ENCODE measurements at regions of chr15 and their contacts with region 1.

Region 1: DNA sequence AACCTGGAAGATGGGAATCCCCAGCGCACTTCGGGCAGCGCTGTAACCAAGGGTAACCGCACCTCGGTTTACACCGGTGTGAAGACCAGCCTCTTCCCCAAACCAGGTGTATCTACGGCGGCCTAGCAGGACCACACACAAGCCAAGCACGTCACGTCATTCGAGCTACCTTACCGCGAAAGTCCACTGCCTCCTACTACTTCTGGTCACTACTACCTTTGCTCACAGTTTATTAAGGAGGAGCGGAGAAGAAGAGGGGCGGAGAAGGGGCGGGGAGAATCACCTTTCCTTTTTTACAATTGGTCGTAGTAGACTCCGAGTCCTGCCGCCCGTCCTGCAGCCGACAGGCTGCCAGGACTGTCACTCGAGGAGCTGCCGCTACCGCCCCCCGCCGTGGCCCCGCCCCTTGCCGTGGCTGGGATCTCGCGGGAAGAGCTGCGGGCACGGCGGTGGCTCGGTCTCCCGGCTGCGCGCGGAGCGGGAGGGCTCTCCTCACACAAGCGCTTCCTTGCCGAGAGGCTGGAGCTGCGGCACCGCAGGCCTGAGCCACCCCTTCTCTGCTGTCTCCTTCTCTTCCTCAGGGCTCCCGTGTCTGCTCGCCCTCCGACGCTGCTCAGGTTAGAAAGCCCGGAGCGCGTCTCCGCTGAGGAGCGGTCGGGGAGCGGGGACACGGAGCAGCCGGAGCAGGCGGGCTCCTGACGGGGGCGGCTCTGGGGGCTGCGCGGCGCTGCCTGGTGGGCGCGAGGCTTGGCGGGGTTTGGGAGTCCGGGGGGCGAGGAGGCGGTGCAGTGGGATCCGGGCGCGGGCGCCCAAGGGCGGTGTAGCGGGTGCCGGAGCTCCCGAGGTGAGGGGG is at the start of gene GLCE:
- DNase-seq: peak; percentile 99

Region 2: DNA sequence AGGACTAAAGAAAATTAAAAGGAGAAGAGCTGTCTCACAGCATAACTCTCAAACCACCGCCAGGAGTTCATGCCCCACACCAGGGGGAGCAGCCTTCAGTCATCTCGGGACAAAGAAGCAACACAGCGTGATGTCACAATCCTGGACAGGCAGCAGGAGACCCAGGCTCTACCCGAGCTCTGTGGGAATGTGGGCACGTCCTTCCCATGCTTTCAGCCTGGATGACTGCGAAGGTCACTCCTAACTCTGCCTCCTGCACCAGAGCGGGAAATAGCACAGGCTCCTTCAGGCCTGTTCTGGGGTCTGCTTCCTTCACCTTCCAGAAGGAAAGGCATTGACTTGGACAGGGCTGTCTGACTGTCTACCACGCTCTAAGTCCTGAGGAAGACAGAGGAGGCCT is 114.6 kb before region 1 on chr15:
- CTCF ChIA-PET with region 1: no interaction called
- POLR2A ChIA-PET with region 1: no interaction called
- DNase-seq: peak; percentile 46

Region 3: DNA sequence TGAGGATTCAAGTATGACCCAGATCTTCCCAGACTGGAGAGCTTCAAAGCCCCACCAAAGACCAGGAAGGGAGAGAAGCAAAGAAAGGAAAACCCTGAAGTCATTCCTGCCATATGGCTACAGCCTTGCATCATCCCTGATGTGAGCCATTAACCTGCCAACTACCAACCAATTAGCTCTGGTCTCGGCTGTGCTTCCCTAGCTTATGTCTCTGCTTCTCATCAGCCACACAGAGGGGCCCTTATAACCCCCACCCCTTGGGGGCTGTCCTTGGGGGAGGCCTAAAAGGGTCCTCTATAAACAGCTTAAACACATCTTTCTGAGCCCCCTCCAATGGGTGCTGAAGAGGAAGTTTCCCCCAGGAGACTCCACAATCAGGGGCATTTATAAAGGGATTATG is 93.1 kb before region 1 on chr15:
- CTCF ChIA-PET with region 1: no interaction called
- POLR2A ChIA-PET with region 1: interaction called, 10 read pairs
- DNase-seq: no peak

Region 4: GRCh38 chr15:69074001-69074842 is 86.1 kb before region 1 on chr15:
- CTCF ChIA-PET with region 1: no interaction called
- POLR2A ChIA-PET with region 1: interaction called, 16 read pairs
- DNase-seq: peak; percentile 72

Region 5: GRCh38 chr15:69141286-69141701 is 19.1 kb before region 1 on chr15:
- CTCF ChIA-PET with region 1: interaction called, 3 read pairs
- POLR2A ChIA-PET with region 1: interaction called, 51 read pairs
- DNase-seq: peak; percentile 34

Region 6: DNA sequence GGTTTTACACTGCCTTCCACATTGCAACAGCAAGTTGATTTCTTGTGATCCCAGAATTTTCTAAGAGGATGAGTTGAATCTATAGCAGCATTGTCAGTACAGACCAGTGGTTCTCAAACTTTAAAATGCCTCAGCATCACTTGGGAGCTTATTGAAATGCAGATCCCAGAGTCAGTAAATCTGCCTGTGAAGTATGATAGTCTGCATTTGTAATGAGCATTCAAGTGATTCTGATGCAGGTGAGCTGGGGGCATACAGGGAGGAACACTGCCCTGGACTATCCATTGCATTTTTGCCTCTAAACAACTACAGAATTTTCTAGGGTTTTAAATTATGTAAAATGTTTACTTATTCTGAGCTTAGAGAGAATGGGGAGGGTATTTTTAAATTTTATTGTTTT is 110.8 kb after region 1 on chr15:
- CTCF ChIA-PET with region 1: no interaction called
- POLR2A ChIA-PET with region 1: no interaction called
- DNase-seq: no peak